ENCODE measurements at regions of chr16 and their contacts with region 1.

Region 1: DNA sequence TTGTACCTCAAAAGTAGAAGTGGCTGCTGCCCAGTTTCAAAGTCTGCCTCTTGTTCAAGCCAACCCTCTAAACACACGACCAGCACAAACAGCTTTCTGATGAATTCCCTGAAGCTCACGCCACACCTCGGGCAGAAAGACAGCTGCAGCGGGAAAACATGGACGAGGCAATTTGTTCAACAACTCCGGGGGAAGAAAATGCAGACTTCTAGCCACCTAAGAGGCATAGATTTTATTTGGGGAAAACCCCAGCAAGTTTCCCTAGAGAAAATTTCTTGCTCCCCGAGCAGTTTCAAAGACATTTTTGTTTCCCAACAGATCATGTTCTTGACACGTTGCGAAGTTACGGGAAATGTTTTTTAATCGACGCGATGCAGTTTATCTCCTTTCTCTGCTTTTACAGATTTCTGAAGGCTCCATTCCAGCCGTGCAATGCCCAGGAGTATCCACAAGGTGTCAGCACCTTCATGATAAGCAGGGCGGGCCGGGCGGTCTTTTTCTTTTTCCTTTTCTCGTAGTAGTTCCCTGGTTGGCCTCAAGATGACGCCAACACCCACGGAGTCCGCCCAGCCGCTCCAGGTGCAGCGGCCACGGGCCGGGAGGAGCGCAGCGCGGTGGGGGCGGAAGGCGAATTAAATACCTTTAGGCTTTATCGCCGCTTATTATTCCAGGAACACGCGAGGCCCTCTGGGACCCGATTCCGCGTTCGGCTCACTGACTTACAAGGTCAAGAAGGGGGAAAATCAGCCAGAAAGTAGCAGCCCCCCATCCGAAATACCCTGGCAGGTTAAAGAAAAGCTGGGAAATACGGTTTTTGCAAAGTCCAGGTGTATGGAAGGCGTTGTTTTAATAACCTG is 2.9 kb upstream of the FOXC2 start:
- DNase-seq: peak; percentile 81 to 83
- ATAC-seq: peak; percentile 82 to 88
- H3K4me3 ChIP-seq: peak overlapping the region in 2 of 4 donors; percentile 16 to 35
- H3K27ac ChIP-seq: no peak overlapping the region
- H3K4me1 ChIP-seq: peaks cover 0 to 6% of the 10 kb centered on the region in 2 donors
- H3K27me3 ChIP-seq: peaks cover 40 to 44% (median 41%) of the 10 kb centered on the region in 3 donors
- CTCF ChIP-seq: peak; percentile 99 to 100 (median 100)
- POLR2A ChIP-seq: no peak

Region 2: GRCh38 chr16:86242244-86243122 is 321.2 kb before region 1 on chr16:
- in situ Hi-C with region 1: no loop called
- intact Hi-C with region 1: no loop called
- DNase-seq: no peak
- ATAC-seq: no peak
- H3K4me3 ChIP-seq: no peak overlapping the region
- H3K27ac ChIP-seq: no peak overlapping the region
- H3K4me1 ChIP-seq: no peaks in the 10 kb centered on the region
- H3K27me3 ChIP-seq: peaks cover 0 to 17% (median 8%) of the 10 kb centered on the region in 3 donors
- CTCF ChIP-seq: no peak
- POLR2A ChIP-seq: no peak

Region 3: DNA sequence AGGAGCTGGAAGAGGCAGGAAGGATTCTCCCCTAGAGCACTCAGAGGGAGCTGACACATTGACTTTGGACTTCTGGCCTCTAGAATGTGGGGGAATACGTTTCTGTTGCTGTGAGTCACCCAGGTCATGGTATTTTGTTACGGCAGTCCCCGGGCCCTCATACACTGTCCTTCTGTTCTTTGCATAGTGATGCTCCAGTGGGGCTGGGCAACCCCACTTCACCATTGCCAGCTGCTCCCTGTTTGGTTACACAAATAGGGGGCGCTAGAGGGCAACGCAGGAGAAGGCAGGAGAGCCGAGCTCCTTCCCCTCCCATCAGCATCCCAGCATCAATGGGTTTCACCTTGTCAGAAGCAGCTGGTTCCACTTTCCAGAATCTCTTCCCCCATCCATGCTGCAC is 311.1 kb before region 1 on chr16:
- in situ Hi-C with region 1: no loop called
- intact Hi-C with region 1: no loop called
- DNase-seq: no peak
- ATAC-seq: no peak
- H3K4me3 ChIP-seq: no peak overlapping the region
- H3K27ac ChIP-seq: no peak overlapping the region
- H3K4me1 ChIP-seq: no peaks in the 10 kb centered on the region
- H3K27me3 ChIP-seq: no peaks in the 10 kb centered on the region
- CTCF ChIP-seq: no peak
- POLR2A ChIP-seq: no peak

Region 4: DNA sequence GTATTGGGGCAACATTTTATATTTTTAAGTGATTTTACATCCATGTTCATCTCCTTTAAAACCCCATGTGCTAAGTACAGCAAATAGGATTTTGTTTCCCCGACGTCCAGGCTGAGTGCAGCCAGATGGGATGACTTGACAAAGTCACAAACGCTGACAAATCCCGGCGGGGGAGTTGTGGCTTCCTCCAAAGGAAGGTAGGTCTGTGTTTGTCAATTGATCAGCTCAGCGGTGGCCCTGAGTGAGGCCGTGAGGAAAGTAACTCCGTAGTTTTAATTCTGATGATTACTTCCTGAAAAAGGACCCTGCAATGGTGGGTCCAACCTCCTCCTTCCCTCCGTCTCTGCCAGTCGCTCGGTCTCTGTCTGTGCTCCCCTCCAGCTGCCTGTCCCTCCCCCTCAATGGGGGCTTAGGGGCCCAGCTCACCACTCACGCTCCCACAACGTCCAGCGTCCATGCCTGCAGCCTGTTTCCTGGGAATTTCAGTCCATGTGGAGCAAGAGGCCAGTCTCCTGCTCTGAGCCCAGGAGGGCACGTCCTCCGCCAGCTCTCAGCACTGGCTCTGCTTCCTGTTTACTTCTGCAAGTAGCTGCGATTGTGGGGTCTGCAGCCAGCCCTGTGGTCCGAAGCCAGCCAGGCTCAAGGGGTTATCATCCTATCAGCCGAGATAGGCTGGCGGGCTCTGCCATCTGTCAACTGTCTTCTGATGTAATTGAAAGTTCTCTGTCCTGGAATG is 262.8 kb before region 1 on chr16:
- in situ Hi-C with region 1: no loop called
- intact Hi-C with region 1: no loop called
- DNase-seq: no peak
- ATAC-seq: no peak
- H3K4me3 ChIP-seq: no peak overlapping the region
- H3K27ac ChIP-seq: no peak overlapping the region
- H3K4me1 ChIP-seq: no peaks in the 10 kb centered on the region
- H3K27me3 ChIP-seq: peaks cover 31 to 52% (median 50%) of the 10 kb centered on the region in 3 donors
- CTCF ChIP-seq: no peak
- POLR2A ChIP-seq: no peak

Region 5: GRCh38 chr16:86531191-86531545 is 32.5 kb before region 1 on chr16:
- in situ Hi-C with region 1: no loop called
- intact Hi-C with region 1: no loop called
- DNase-seq: no peak
- ATAC-seq: no peak
- H3K4me3 ChIP-seq: no peak overlapping the region
- H3K27ac ChIP-seq: no peak overlapping the region
- H3K4me1 ChIP-seq: peaks cover 0 to 18% of the 10 kb centered on the region in 2 donors
- H3K27me3 ChIP-seq: no peaks in the 10 kb centered on the region
- CTCF ChIP-seq: no peak
- POLR2A ChIP-seq: no peak

Region 6: DNA sequence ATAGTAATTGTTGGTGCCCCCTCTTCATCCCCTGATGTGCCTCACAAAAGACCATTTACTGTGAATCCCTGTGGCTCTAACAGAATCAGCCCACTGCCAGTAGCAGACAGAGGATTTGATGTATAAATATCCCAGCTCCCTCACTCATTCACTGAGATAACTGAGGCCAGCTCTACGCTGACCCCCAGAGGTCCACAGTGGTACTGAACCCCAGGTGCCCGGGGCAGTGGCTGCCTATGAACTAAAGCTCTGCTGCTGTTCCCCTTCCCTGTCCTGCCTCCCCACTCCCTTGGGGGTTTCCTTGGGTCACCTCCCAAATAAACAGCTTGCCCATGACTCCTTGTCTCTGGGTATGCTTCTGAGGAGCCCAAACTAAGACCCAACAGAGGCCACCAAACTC is 310.4 kb after region 1 on chr16:
- in situ Hi-C with region 1: loop called in 1 of 4 experiments (anchors 10 kb)
- intact Hi-C with region 1: loop called (anchors 1 kb)
- DNase-seq: no peak
- ATAC-seq: peak in 1 of 2 donors; percentile 39
- H3K4me3 ChIP-seq: no peak overlapping the region
- H3K27ac ChIP-seq: no peak overlapping the region
- H3K4me1 ChIP-seq: no peaks in the 10 kb centered on the region
- H3K27me3 ChIP-seq: peaks cover 0 to 21% (median 14%) of the 10 kb centered on the region in 3 donors
- CTCF ChIP-seq: peak in 4 of 5 experiments; percentile 22 to 59 (median 46)
- POLR2A ChIP-seq: no peak

Region 7: DNA sequence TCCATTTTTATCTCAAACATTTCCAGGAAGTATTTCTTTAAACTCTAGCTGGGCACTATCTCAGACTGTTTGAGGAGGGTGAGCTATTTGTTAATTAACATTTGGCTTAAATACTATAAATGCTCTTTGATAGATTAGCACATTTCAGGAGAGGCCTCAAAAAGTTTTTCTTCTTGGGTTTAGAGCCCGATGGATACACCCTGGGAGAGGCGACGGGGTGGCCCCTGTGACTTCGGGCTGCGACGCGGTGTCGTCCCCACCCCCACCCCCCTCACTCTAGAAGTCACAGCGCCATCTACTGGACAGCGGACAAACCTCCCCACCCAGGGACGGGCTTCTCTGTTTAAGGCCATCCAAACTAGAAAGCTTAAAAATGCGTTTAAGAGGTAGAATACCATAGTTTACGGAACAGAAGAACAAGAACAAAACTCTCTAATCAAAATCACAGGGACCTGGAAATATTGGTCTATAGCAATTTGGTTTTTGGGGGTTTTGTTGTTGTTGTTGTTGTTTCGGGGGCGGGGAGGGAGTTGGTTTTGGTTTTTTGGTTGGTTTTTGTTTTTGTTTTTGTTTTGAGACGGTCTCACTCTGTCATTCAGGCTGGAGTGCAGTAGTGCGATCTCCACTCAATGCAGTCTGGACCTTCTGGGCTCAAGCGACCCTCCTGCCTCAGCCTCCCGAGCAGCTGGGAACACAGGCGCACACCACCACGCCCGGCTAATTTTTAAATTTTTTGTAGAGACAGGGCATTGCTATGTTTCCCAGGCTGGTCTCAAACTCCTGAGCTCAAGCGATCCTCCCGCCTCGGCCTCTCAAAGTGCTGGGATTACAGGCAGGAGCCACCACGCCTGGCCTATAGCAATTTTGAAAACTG is 499.1 kb after region 1 on chr16:
- in situ Hi-C with region 1: loop called (anchors 5 to 10 kb)
- intact Hi-C with region 1: loop called (anchors 1 kb)
- DNase-seq: peak in 1 of 2 donors; percentile 45
- ATAC-seq: peak; percentile 92
- H3K4me3 ChIP-seq: peak overlapping the region in 1 of 4 donors; percentile 33
- H3K27ac ChIP-seq: no peak overlapping the region
- H3K4me1 ChIP-seq: no peaks in the 10 kb centered on the region
- H3K27me3 ChIP-seq: peaks cover 0 to 24% (median 4%) of the 10 kb centered on the region in 3 donors
- CTCF ChIP-seq: peak; percentile 58 to 84 (median 79)
- POLR2A ChIP-seq: no peak

Region 8: GRCh38 chr16:87203060-87203656 is 639.4 kb after region 1 on chr16:
- in situ Hi-C with region 1: loop called in 1 of 4 experiments (anchors 10 kb)
- intact Hi-C with region 1: no loop called
- DNase-seq: peak in 1 of 2 donors; percentile 36
- ATAC-seq: peak in 1 of 2 donors; percentile 39
- H3K4me3 ChIP-seq: no peak overlapping the region
- H3K27ac ChIP-seq: no peak overlapping the region
- H3K4me1 ChIP-seq: no peaks in the 10 kb centered on the region
- H3K27me3 ChIP-seq: peaks cover 0 to 6% (median 0%) of the 10 kb centered on the region in 3 donors
- CTCF ChIP-seq: peak; percentile 36 to 75 (median 62)
- POLR2A ChIP-seq: no peak

Region 9: DNA sequence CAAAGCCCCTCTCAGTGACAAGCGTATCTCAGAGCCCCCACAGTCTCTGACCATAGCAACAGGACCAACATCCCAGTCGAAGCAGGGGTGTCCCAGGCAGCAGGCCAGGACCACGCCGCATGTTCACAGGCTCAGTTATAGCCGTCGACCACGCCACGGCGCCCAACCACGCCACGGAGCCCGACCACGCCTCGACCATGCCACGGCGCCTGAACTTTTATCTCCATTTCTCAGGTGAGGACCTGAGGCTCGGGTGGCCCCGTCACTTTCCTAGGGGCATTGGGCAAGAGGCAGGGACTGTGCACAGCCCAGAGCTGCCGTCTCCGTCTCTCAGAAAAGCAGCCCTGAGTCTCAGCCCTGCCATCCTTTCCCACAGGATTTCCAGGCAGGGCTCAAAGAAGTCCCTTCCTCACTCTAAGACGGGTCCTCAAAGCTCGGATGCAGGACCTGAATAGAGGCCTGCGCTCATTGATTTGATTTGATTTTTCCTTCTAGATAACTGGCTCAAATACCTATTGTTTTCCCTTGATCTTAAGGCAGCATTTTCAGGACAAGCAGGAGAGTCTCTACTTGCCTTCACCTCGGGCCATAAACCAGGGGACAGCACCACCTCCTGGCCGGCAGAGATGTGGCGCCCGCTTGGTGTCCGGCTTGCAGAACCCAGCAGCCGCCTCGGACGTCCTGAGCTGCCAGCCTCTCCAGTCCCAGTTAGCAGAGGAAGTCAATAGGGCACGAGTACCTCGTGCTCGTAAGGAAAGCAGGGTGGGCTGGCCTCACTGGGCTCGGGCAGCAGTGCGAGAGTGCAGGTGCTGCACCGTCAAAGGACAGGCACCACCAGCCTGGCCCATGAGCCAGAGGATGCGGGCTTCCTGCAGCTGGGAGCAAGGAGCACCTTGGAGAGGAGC is 714.7 kb after region 1 on chr16:
- in situ Hi-C with region 1: loop called (anchors 10 to 25 kb)
- intact Hi-C with region 1: loop called (anchors 1 kb)
- DNase-seq: peak; percentile 17 to 29
- ATAC-seq: peak; percentile 58 to 75
- H3K4me3 ChIP-seq: no peak overlapping the region
- H3K27ac ChIP-seq: no peak overlapping the region
- H3K4me1 ChIP-seq: no peaks in the 10 kb centered on the region
- H3K27me3 ChIP-seq: no peaks in the 10 kb centered on the region
- CTCF ChIP-seq: peak; percentile 50 to 75 (median 71)
- POLR2A ChIP-seq: no peak